Naive thymus-derived CD4-positive, alpha-beta T cell (primary cell): ENCODE measurements at regions of chr12 and their contacts with region 1.

Region 1: GRCh38 chr12:67661311-67662021 is 12.9 kb downstream of the DYRK2 start:
- DNase-seq: no peak
- ATAC-seq: no peak
- H3K4me3 ChIP-seq: no peak overlapping the region
- H3K4me3 Mint-ChIP-seq: peak overlapping the region in 6 of 10 donors; percentile 20 to 67 (median 52)
- H3K27ac ChIP-seq: no peak overlapping the region
- H3K27ac Mint-ChIP-seq: peak overlapping the region in 7 of 9 donors; percentile 20 to 71 (median 63)
- H3K4me1 ChIP-seq: peaks cover 38 to 69% of the 10 kb centered on the region in 2 donors
- H3K4me1 Mint-ChIP-seq: peaks cover 44 to 98% (median 93%) of the 10 kb centered on the region in 7 donors
- H3K27me3 ChIP-seq: no peaks in the 10 kb centered on the region
- H3K27me3 Mint-ChIP-seq: no peaks in the 10 kb centered on the region

Region 2: GRCh38 chr12:67355578-67356379 is 305.7 kb before region 1 on chr12:
- CTCF ChIA-PET with region 1: interaction called, 8 read pairs
- POLR2A ChIA-PET with region 1: interaction called, 3 read pairs
- intact Hi-C with region 1: loop called in 1 of 2 experiments (anchors 1 kb)
- DNase-seq: peak in 7 of 9 donors; percentile 27 to 68 (median 61)
- ATAC-seq: peak; percentile 70
- H3K4me3 ChIP-seq: no peak overlapping the region
- H3K4me3 Mint-ChIP-seq: peak overlapping the region in 7 of 10 donors; percentile 23 to 65 (median 51)
- H3K27ac ChIP-seq: no peak overlapping the region
- H3K27ac Mint-ChIP-seq: peak overlapping the region in 3 of 9 donors; percentile 42 to 63 (median 54)
- H3K4me1 ChIP-seq: peaks cover 0 to 5% of the 10 kb centered on the region in 2 donors
- H3K4me1 Mint-ChIP-seq: peaks cover 2 to 21% (median 16%) of the 10 kb centered on the region in 7 donors
- H3K27me3 ChIP-seq: no peaks in the 10 kb centered on the region
- H3K27me3 Mint-ChIP-seq: no peaks in the 10 kb centered on the region

Region 3: GRCh38 chr12:67515679-67516340 is 145.7 kb before region 1 on chr12:
- CTCF ChIA-PET with region 1: no interaction called
- POLR2A ChIA-PET with region 1: no interaction called
- intact Hi-C with region 1: no loop called
- DNase-seq: peak in 8 of 9 donors; percentile 11 to 70 (median 50)
- ATAC-seq: peak; percentile 82
- H3K4me3 ChIP-seq: peak overlapping the region; percentile 37
- H3K4me3 Mint-ChIP-seq: peak overlapping the region; percentile 52 to 81 (median 72)
- H3K27ac ChIP-seq: no peak overlapping the region
- H3K27ac Mint-ChIP-seq: peak overlapping the region; percentile 40 to 90 (median 79)
- H3K4me1 ChIP-seq: peaks cover 34 to 39% of the 10 kb centered on the region in 2 donors
- H3K4me1 Mint-ChIP-seq: peaks cover 36 to 65% (median 54%) of the 10 kb centered on the region in 7 donors
- H3K27me3 ChIP-seq: no peaks in the 10 kb centered on the region
- H3K27me3 Mint-ChIP-seq: peaks cover 0 to 15% (median 0%) of the 10 kb centered on the region in 5 donors

Region 4: DNA sequence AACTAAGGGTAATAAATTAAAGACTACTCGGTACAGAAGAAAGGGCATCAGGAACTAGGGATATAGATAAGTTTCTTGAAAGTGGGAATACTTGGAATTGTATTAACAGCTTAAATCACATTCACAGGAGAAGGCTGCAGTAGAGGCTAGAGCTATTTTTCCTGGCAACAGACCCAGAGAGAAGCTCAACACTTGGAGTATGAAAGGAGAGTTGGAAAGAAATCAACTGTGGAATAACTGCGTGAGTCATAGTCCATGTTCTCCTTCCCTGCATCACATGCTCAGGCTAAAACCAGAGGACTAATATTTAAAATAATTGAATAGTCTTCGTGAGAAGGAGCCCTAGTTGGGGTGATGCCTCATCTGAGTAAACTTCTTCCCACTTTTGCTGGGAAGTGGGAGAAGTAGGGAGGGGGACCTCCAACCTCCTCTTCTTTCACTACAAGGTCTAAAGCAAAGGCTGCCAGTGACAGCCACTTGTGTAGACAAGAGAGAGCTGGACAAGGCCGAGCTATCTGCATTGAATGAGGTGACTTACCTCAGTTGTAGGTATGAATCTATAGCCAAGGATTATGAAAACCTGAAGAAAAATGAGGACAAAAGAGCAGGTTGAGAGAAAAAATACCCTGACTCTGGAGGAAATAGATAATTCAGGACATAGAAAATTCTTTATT is 19.8 kb after region 1 on chr12:
- CTCF ChIA-PET with region 1: no interaction called
- POLR2A ChIA-PET with region 1: interaction called, 4 read pairs
- intact Hi-C with region 1: loop called in 1 of 2 experiments (anchors 2 kb)
- DNase-seq: no peak
- ATAC-seq: no peak
- H3K4me3 ChIP-seq: no peak overlapping the region
- H3K4me3 Mint-ChIP-seq: no peak overlapping the region
- H3K27ac ChIP-seq: no peak overlapping the region
- H3K27ac Mint-ChIP-seq: peak overlapping the region in 1 of 9 donors; percentile 10
- H3K4me1 ChIP-seq: peaks cover 0 to 10% of the 10 kb centered on the region in 2 donors
- H3K4me1 Mint-ChIP-seq: peaks cover 7 to 26% (median 24%) of the 10 kb centered on the region in 7 donors
- H3K27me3 ChIP-seq: no peaks in the 10 kb centered on the region
- H3K27me3 Mint-ChIP-seq: peaks cover 0 to 17% (median 0%) of the 10 kb centered on the region in 5 donors

Region 5: GRCh38 chr12:67698672-67699581 is 37.5 kb after region 1 on chr12:
- CTCF ChIA-PET with region 1: no interaction called
- POLR2A ChIA-PET with region 1: interaction called, 3 read pairs
- intact Hi-C with region 1: loop called in 1 of 2 experiments (anchors 2 kb)
- DNase-seq: peak in 8 of 9 donors; percentile 26 to 55 (median 44)
- ATAC-seq: peak; percentile 82
- H3K4me3 ChIP-seq: peak overlapping the region; percentile 39
- H3K4me3 Mint-ChIP-seq: peak overlapping the region; percentile 71 to 86 (median 82)
- H3K27ac ChIP-seq: peak overlapping the region; percentile 62
- H3K27ac Mint-ChIP-seq: peak overlapping the region; percentile 58 to 91 (median 73)
- H3K4me1 ChIP-seq: peaks cover 20 to 24% of the 10 kb centered on the region in 2 donors
- H3K4me1 Mint-ChIP-seq: peaks cover 28 to 74% (median 60%) of the 10 kb centered on the region in 7 donors
- H3K27me3 ChIP-seq: no peaks in the 10 kb centered on the region
- H3K27me3 Mint-ChIP-seq: peaks cover 0 to 58% (median 0%) of the 10 kb centered on the region in 5 donors